KBM-7 (cell line): ENCODE measurements at regions of chr7 and their contacts with region 1.

Region 1: GRCh38 chr7:98841179-98841997 is 28.4 kb downstream of the TMEM130 start:
- DNase-seq: peak; percentile 67

Region 2: DNA sequence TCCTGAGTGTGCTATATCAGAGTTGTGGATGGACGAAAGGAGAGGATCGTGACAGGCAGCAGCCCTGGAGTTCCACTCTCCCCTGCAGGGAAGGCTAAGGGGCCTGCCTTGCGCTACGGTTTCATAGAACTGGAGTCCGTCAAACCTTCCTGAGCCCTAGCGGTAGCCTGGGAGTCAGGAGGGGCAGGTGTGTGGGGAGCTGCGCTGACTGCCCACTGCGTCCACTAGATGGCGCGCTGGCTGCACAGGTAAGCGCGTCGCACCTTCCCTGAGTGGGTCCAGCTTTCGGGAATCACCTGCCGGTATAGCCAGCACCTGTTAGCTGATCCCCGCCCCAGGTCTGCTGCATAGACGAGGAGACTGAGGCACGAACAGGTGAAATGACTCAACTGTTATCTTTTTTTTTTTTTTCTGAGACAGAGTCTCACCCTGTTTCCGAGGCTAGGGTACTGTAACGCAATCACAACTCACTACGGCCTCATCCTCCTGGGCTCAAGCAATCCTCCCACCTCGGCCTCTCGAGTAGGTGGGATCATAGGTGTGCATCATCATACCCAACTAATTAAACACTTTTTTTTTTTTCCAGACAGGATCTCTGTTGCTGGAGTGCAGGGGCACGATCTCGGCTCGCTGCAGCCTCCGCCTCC is 420.3 kb before region 1 on chr7:
- in situ Hi-C with region 1: loop called (anchors 10 kb)
- DNase-seq: peak; percentile 58